ENCODE measurements at regions of chr9 and their contacts with region 1.

Region 1: DNA sequence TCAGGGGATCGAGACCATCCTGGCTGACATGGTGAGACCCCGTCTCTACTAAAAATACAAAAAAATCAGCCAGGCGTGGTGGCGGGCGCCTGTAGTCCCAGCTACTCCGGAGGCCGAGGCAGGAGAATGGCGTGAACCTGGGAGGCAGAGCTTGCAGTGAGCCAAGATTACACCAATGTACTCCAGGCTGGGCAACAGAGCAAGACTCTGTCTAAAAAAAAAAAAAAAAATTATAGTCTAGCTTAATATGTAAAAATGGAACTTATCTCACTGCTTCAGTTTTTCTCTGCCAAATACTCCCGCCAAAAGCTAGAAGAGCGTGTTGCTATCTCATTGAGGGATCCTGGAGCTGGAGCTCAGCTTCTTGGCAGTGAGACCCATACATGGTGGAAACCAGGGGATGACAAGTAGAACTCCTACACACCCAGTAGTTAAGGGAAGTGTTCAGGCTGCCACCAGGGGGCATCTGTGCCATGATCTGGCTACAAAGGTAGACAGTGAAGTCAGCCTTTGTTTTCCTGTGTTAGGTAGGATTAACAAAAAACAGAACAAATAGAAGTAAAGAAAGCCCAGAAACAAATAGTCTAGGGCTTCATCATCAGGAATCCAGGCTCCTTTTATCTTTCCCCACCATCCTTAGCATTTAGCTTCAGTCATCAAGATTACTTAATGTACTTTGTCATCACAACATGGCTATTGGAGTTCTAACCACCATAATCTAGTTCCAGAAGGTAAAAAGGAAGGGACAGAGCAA is 33.6 kb upstream of the GLIPR2 start:
- DNase-seq: peak; percentile 74 to 86
- ATAC-seq: peak; percentile 90 to 91
- H3K4me3 ChIP-seq: no peak overlapping the region
- H3K27ac ChIP-seq: peak overlapping the region; percentile 26 to 77
- H3K4me1 ChIP-seq: peaks cover 26% of the 10 kb centered on the region
- CTCF ChIP-seq: peak; percentile 71
- EP300 ChIP-seq: no peak
- POLR2A ChIP-seq: no peak
- RAD21 ChIP-seq: peak; percentile 64 to 84; a peak in 4 of 5 replicates

Region 2: DNA sequence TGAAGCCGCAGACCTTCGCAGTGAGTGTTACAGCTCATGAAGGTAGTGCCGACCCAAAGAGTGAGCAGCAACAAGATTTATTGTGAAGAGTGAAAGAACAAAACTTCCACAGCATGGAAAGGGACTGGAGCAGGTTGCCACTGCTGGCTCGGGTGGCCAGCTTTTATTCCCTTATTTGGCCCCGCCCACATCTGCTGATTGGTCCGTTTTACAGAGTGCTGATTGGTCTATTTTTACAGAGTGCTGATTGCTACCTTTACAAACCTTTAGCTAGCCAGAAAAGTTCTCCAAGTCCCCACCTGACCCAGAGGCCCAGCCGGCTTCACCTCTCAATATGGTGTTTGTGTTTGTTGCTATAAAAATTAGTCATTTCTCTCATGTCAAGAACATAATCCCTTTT is 16.5 kb before region 1 on chr9:
- CTCF ChIA-PET with region 1: interaction called, 58 read pairs
- POLR2A ChIA-PET with region 1: no interaction called
- DNase-seq: no peak
- ATAC-seq: no peak
- H3K4me3 ChIP-seq: no peak overlapping the region
- H3K27ac ChIP-seq: no peak overlapping the region
- H3K4me1 ChIP-seq: peaks cover 17% of the 10 kb centered on the region; the same call in 2 of the 3 replicates
- CTCF ChIP-seq: no peak
- EP300 ChIP-seq: no peak
- POLR2A ChIP-seq: no peak
- RAD21 ChIP-seq: no peak

Region 3: GRCh38 chr9:36116593-36116992 is 13.7 kb after region 1 on chr9:
- CTCF ChIA-PET with region 1: interaction called, 43 read pairs
- POLR2A ChIA-PET with region 1: no interaction called
- DNase-seq: no peak
- ATAC-seq: no peak
- H3K4me3 ChIP-seq: no peak overlapping the region
- H3K27ac ChIP-seq: no peak overlapping the region
- H3K4me1 ChIP-seq: no peaks in the 10 kb centered on the region
- CTCF ChIP-seq: no peak
- EP300 ChIP-seq: no peak
- POLR2A ChIP-seq: no peak
- RAD21 ChIP-seq: no peak

Region 4: DNA sequence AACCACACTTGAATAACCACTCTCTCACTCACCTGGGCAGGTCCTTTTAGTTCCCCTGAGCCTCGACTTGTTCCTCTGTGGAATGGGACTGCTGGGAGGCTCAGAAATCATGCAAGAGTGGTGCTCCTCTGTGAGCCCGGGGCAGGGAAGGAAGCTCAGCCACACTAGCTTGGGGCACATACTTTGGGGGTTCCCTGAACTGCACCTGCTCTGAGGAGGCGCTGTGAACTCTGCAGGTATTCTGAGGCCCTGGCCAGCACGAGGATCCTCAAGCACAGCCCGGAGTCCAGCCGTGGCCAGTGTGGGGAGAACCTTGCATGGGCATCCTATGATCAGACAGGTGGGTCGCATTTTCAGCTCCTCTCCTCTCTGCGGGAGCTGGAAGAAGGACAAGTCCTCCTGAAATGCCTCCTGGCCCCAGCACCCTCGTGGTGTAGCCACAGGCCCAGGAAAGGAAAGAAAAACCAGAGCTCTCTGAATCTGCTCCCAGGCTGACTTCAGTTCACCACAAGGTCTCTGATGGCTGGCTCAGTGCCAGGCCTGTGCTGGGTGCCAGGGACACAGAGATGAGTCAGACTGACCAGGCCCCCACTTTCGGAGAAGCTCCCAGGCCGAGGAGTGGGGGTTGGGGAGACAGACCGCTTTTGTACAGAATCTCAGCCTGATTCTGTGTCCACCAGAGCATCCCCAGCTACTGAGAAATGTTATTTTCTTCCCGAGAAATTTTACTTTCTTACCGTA is 45.6 kb after region 1 on chr9:
- CTCF ChIA-PET with region 1: interaction called, 40 read pairs
- POLR2A ChIA-PET with region 1: no interaction called
- DNase-seq: peak; percentile 85 to 91
- ATAC-seq: peak; percentile 81
- H3K4me3 ChIP-seq: no peak overlapping the region
- H3K27ac ChIP-seq: peak overlapping the region; percentile 65 to 82
- H3K4me1 ChIP-seq: peaks cover 26% of the 10 kb centered on the region
- CTCF ChIP-seq: no peak
- EP300 ChIP-seq: no peak
- POLR2A ChIP-seq: no peak
- RAD21 ChIP-seq: no peak; a peak in 2 of 5 replicates